ENCODE measurements at regions of chr19 and their contacts with region 1.

Region 1: DNA sequence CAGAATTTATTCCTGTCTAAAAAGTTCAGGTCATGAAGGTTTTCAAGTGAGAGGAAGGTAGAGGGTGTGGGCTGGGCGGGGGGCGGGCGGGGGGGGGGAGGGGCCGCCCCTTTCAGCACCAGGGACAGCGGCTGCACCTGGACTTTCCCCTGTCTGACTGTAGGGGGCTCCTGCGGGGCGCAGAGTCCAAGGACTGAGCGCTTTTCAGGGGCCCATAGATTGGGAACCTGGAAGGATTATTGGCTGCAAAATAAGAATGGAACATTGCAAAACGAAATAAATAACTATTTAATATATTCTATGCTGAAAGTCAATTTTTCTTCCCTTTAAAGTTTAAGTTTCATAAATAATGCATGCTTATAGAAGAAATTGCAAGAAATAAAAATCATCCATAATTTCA is 8.9 kb upstream of the CYP4F3 start:
- DNase-seq: peak; percentile 44 to 66 (median 55)
- H3K4me3 ChIP-seq: no peak overlapping the region
- H3K27ac ChIP-seq: no peak overlapping the region
- H3K4me1 ChIP-seq: peaks cover 0 to 6% (median 4%) of the 10 kb centered on the region in 4 experiments
- H3K27me3 ChIP-seq: peaks cover 0 to 23% (median 2%) of the 10 kb centered on the region in 5 experiments

Region 2: GRCh38 chr19:15810335-15810734 is 178.5 kb after region 1 on chr19:
- CTCF ChIA-PET with region 1: interaction called, 17 read pairs
- POLR2A ChIA-PET with region 1: no interaction called
- DNase-seq: peak; percentile 46 to 48 (median 47)
- H3K4me3 ChIP-seq: no peak overlapping the region
- H3K27ac ChIP-seq: no peak overlapping the region
- H3K4me1 ChIP-seq: peaks cover 0 to 15% (median 6%) of the 10 kb centered on the region in 4 experiments
- H3K27me3 ChIP-seq: peaks cover 0 to 30% (median 1%) of the 10 kb centered on the region in 5 experiments